ENCODE measurements at regions of chr4 and their contacts with region 1.

Region 1: GRCh38 chr4:5003372-5003857 is 15.8 kb downstream of the CYTL1 start:
- DNase-seq: peak; percentile 87 to 94 (median 91)
- ATAC-seq: peak; percentile 95
- H3K4me3 ChIP-seq: no peak overlapping the region
- H3K27ac ChIP-seq: peak overlapping the region; percentile 68; the same call in 2 of the 3 replicates
- H3K4me1 ChIP-seq: peaks cover 23 to 26% of the 10 kb centered on the region in 2 experiments
- H3K27me3 ChIP-seq: no peaks in the 10 kb centered on the region
- CTCF ChIP-seq: no peak
- EP300 ChIP-seq: peak; percentile 98
- POLR2A ChIP-seq: no peak
- RAD21 ChIP-seq: 0 out of 4 replicates have a peak, but pooled peaks of 1 of the 2 experiments have one; percentile 17

Region 2: DNA sequence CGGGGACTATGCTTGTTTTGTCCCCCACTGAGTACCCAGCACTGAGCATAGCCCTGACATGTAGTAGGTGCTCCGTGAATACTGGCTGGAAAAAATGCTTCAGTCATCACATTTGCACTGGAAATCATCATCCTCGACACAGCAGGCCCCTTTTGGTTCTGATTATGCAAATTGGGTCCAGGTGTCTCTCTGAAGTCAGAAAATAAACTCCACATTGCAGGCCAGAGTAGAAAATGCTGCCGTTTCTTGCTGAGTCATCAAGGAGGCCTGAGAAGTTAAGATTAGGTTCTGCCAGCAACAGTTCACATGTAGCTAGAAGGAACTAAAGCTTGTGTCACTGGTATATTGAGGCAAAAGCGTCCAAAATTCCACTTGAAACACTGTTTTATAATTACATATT is 32.8 kb after region 1 on chr4:
- CTCF ChIA-PET with region 1: no interaction called
- POLR2A ChIA-PET with region 1: interaction called, 4 read pairs
- in situ Hi-C with region 1: no loop called
- intact Hi-C with region 1: loop called (anchors 1 kb)
- DNase-seq: peak; percentile 24 to 91 (median 48)
- ATAC-seq: peak; percentile 82
- H3K4me3 ChIP-seq: no peak overlapping the region
- H3K27ac ChIP-seq: peak overlapping the region; percentile 76
- H3K4me1 ChIP-seq: peaks cover 24 to 59% of the 10 kb centered on the region in 2 experiments
- H3K27me3 ChIP-seq: no peaks in the 10 kb centered on the region
- CTCF ChIP-seq: no peak
- EP300 ChIP-seq: peak; percentile 95
- POLR2A ChIP-seq: no peak
- RAD21 ChIP-seq: no peak

Region 3: DNA sequence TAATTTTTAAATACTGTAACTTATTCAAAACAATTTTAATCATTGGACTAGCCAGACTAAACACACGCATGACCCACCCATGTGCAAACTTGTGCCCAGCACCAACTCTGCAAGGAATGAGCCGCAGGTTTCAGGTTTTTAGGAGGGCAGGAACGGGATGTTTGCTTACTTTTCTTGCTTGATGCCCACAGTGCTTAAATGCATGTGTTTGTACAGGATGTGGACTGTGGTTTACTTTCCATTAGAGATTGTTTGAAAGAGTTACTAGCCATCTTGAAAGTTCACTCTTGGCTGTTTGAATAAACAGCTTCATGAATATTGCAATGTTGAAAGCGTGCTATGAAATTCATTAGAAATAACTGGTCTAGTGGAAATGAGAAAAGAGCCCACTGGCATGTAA is 131.2 kb after region 1 on chr4:
- CTCF ChIA-PET with region 1: no interaction called
- POLR2A ChIA-PET with region 1: no interaction called
- in situ Hi-C with region 1: no loop called
- intact Hi-C with region 1: no loop called
- DNase-seq: no peak
- ATAC-seq: no peak
- H3K4me3 ChIP-seq: no peak overlapping the region
- H3K27ac ChIP-seq: no peak overlapping the region
- H3K4me1 ChIP-seq: no peaks in the 10 kb centered on the region
- H3K27me3 ChIP-seq: peaks cover 0 to 23% of the 10 kb centered on the region in 2 experiments; a peak in 2 of 5 replicates
- CTCF ChIP-seq: no peak
- EP300 ChIP-seq: no peak
- POLR2A ChIP-seq: no peak
- RAD21 ChIP-seq: no peak

Measured in K562 (cell line).